OCI-LY7 (cell line): ENCODE measurements at regions of chr6 and their contacts with region 1.

Region 1: DNA sequence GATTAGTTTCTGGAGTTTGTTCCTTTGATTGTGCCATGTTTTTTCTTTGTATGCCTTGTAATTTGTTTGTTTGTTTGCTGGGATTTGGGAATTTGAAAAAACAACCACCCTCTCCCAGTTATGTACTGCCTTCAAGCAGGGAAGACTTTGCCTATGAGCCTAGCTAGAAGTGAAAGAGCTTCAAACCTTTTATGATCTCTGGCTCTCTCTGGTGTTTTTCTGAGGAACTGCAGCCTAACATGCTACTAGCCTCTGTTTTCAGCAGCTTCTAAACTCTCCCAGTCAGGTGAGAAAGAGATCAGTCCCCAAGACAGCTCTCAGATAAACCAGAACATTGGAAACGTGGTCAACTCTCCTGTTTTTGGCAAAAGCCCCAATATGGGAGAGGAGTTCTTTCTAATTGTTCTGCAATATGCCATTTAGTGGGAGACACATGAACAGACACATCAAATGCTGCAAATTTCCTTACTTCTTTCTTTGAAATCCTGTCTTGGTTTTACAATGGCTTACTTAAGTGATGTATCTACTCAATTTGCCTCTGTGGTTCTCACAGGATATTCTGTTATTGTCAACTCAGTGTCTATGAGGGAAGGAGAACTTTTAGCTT is 58.9 kb upstream of the SERINC1 start:
- DNase-seq: peak; percentile 64
- H3K4me3 ChIP-seq: no peak overlapping the region
- H3K27ac ChIP-seq: no peak overlapping the region
- H3K4me1 ChIP-seq: no peaks in the 10 kb centered on the region
- CTCF ChIP-seq: peak; percentile 87

Region 2: GRCh38 chr6:122381497-122382265 is 148.9 kb before region 1 on chr6:
- CTCF ChIA-PET with region 1: no interaction called
- POLR2A ChIA-PET with region 1: interaction called, 3 read pairs
- intact Hi-C with region 1: loop called (anchors 1 kb)
- DNase-seq: peak; percentile 67
- H3K4me3 ChIP-seq: no peak overlapping the region
- H3K27ac ChIP-seq: no peak overlapping the region
- H3K4me1 ChIP-seq: no peaks in the 10 kb centered on the region
- CTCF ChIP-seq: peak; percentile 84

Region 3: GRCh38 chr6:122491919-122492555 is 38.5 kb before region 1 on chr6:
- CTCF ChIA-PET with region 1: interaction called, 8 read pairs
- POLR2A ChIA-PET with region 1: interaction called, 3 read pairs
- intact Hi-C with region 1: loop called (anchors 1 kb)
- DNase-seq: peak; percentile 63
- H3K4me3 ChIP-seq: no peak overlapping the region
- H3K27ac ChIP-seq: no peak overlapping the region
- H3K4me1 ChIP-seq: no peaks in the 10 kb centered on the region
- CTCF ChIP-seq: peak; percentile 96